ENCODE measurements at regions of chr4 and their contacts with region 1.

Region 1: DNA sequence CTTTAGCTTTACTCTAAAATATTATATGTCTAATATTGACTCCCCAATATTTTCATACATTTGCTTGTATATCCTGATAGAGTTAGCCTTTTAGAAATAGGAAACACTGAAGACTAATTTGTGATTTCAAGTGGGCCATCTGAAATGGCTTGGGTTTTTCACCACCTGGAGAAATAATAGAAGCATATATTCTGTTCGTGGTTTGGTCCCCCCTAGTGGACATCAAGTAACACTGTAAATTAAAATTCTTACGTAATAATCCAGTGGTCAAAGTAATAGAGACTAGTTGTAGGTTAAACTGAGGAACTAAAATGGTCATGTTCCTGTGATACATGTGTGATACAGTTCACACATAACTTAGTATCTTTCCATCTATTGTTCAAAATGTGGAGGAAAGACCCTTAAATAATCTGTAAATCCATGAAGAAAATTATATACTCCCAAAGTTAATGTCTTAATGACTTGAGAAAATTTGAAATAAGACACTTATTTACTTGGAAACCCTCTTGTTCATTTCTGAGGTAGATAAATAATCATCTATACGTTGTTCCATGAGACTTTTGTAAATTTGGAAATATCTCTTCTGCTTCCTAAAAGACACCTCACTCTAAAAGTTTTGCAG is 79.8 kb upstream of the SMARCAD1 start:
- DNase-seq: no peak
- ATAC-seq: no peak

Region 2: GRCh38 chr4:93791570-93792195 is 336.1 kb before region 1 on chr4:
- intact Hi-C with region 1: loop called (anchors 2 to 5 kb)
- DNase-seq: peak; percentile 35
- ATAC-seq: peak; percentile 59 to 68

Region 3: GRCh38 chr4:93897559-93897958 is 230.3 kb before region 1 on chr4:
- intact Hi-C with region 1: loop called in 1 of 2 experiments (anchors 10 kb)
- DNase-seq: no peak
- ATAC-seq: no peak